ENCODE measurements at regions of chr15 and their contacts with region 1.

Region 1: DNA sequence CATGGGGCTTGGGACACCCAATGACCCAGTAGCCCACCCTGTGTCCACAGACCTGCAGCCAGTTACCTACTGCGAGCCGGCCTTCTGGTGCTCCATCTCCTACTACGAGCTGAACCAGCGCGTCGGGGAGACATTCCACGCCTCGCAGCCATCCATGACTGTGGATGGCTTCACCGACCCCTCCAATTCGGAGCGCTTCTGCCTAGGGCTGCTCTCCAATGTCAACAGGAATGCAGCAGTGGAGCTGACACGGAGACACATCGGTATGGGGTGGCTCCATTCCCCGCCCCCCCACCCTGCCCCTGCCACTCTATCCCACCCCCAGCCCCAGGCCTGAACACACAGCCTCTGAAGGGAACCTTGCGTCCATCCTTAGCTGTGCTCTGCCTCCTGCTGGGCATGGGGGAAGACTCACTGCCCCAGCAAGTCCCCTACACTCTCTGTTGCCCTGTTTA is 73.2 kb downstream of the AAGAB start:
- DNase-seq: peak in 4 of 9 donors; percentile 7 to 17 (median 11)
- ATAC-seq: no peak
- H3K4me3 ChIP-seq: no peak overlapping the region
- H3K4me3 Mint-ChIP-seq: no peak overlapping the region
- H3K27ac ChIP-seq: no peak overlapping the region
- H3K27ac Mint-ChIP-seq: no peak overlapping the region
- H3K4me1 ChIP-seq: no peaks in the 10 kb centered on the region
- H3K4me1 Mint-ChIP-seq: peaks cover 0 to 23% (median 8%) of the 10 kb centered on the region in 7 donors
- H3K27me3 ChIP-seq: no peaks in the 10 kb centered on the region
- H3K27me3 Mint-ChIP-seq: no peaks in the 10 kb centered on the region

Region 2: DNA sequence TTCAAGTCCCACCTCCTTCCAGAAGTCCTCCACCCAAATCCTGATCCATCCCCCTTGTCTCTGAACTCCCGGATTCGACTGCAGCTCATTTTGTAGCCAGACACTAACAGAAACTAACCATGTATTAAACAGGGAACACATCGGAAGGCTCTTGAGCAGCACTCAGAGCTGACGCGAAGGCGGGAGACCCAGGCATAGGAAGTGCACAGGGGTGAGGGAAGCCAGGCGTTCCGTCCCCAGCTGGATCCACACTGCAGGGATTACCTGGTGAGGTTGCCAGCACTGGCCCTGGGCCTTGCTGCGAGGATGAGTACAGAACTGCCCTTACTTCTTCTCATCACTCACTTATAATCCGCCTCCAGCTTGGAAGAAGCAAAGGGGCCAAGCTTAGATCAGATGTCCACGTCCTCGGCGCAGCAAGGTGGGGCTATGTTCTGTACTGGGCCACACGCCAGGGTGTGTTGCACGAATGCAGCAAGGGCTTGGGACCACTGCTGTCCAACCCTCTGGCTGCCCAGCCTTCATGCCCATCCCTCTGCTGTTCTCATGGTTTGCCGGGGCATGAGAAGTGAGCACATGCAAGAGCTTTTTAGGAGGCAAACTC is 240.0 kb before region 1 on chr15:
- CTCF ChIA-PET with region 1: interaction called, 10 read pairs
- POLR2A ChIA-PET with region 1: no interaction called
- intact Hi-C with region 1: loop called (anchors 1 to 2 kb)
- DNase-seq: no peak
- ATAC-seq: no peak
- H3K4me3 ChIP-seq: no peak overlapping the region
- H3K4me3 Mint-ChIP-seq: no peak overlapping the region
- H3K27ac ChIP-seq: no peak overlapping the region
- H3K27ac Mint-ChIP-seq: no peak overlapping the region
- H3K4me1 ChIP-seq: no peaks in the 10 kb centered on the region
- H3K4me1 Mint-ChIP-seq: peaks cover 0 to 7% (median 0%) of the 10 kb centered on the region in 7 donors
- H3K27me3 ChIP-seq: no peaks in the 10 kb centered on the region
- H3K27me3 Mint-ChIP-seq: peaks cover 0 to 4% (median 0%) of the 10 kb centered on the region in 5 donors

Region 3: DNA sequence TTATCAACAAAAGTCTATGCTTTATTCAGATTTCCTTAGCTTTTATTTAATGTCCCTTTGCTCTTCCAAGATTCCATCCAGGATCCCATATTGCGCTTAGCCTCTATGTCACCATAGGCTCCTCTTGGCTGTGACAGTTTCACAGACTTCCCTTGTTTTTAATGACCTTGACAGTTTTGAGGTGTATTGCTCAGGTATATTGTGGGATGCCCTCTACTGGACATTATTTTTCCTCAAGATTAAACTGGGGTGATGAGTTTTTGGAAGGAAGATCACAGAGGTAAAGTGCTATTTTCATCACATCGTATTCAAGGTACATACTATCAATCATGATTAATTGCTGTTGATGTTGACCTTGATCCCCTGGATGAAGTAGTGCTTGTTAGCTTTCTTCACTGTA is 215.0 kb before region 1 on chr15:
- CTCF ChIA-PET with region 1: no interaction called
- POLR2A ChIA-PET with region 1: no interaction called
- intact Hi-C with region 1: loop called in 1 of 2 experiments (anchors 5 kb)
- DNase-seq: peak in 5 of 9 donors; percentile 8 to 29 (median 12)
- ATAC-seq: no peak
- H3K4me3 ChIP-seq: no peak overlapping the region
- H3K4me3 Mint-ChIP-seq: no peak overlapping the region
- H3K27ac ChIP-seq: no peak overlapping the region
- H3K27ac Mint-ChIP-seq: no peak overlapping the region
- H3K4me1 ChIP-seq: no peaks in the 10 kb centered on the region
- H3K4me1 Mint-ChIP-seq: no peaks in the 10 kb centered on the region
- H3K27me3 ChIP-seq: no peaks in the 10 kb centered on the region
- H3K27me3 Mint-ChIP-seq: peaks cover 0 to 18% (median 0%) of the 10 kb centered on the region in 5 donors

Region 4: GRCh38 chr15:66994927-66995656 is 186.1 kb before region 1 on chr15:
- CTCF ChIA-PET with region 1: no interaction called
- POLR2A ChIA-PET with region 1: no interaction called
- intact Hi-C with region 1: no loop called
- DNase-seq: no peak
- ATAC-seq: no peak
- H3K4me3 ChIP-seq: no peak overlapping the region
- H3K4me3 Mint-ChIP-seq: no peak overlapping the region
- H3K27ac ChIP-seq: no peak overlapping the region
- H3K27ac Mint-ChIP-seq: no peak overlapping the region
- H3K4me1 ChIP-seq: no peaks in the 10 kb centered on the region
- H3K4me1 Mint-ChIP-seq: peaks cover 0 to 2% (median 0%) of the 10 kb centered on the region in 7 donors
- H3K27me3 ChIP-seq: no peaks in the 10 kb centered on the region
- H3K27me3 Mint-ChIP-seq: peaks cover 0 to 25% (median 0%) of the 10 kb centered on the region in 5 donors

Region 5: DNA sequence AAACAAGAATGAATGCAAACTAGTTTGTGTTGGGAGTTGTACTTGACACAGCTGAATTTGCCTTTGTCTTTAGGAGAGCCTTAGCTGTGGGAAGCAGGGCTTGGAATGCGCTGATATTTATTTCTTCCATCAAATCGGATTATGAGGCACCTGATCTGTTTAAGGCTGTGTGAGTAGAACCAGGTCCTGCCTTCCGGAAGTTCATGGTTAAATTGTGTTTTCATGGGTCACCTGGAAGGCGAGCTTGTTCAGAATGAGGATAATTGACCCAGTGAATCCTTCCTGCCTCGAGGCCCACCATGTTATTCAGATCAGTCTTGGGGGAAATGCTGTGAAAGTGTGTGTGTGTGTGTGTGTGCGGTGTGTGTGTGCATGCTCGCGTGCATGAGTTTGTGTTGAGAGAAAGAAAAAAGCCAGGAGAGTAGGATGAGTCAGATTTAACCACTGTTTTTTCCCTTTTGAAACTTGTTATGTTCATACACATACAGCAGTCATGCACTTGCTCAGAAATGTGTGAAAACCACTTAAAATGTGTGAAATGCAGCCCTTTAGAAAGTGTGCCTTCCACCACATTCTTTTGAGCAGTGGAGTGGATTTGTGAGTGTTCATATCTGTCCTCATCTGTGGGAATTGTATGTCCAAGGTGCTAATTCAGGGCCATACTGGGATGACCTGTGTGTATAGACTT is 79.2 kb before region 1 on chr15:
- CTCF ChIA-PET with region 1: no interaction called
- POLR2A ChIA-PET with region 1: no interaction called
- intact Hi-C with region 1: no loop called
- DNase-seq: peak in 1 of 9 donors; percentile 51
- ATAC-seq: peak; percentile 62
- H3K4me3 ChIP-seq: peak overlapping the region; percentile 15
- H3K4me3 Mint-ChIP-seq: no peak overlapping the region
- H3K27ac ChIP-seq: peak overlapping the region; percentile 61
- H3K27ac Mint-ChIP-seq: no peak overlapping the region
- H3K4me1 ChIP-seq: peaks cover 92 to 95% of the 10 kb centered on the region in 2 donors
- H3K4me1 Mint-ChIP-seq: peaks cover 26 to 64% (median 27%) of the 10 kb centered on the region in 7 donors
- H3K27me3 ChIP-seq: no peaks in the 10 kb centered on the region
- H3K27me3 Mint-ChIP-seq: no peaks in the 10 kb centered on the region

Region 6: GRCh38 chr15:67446449-67446848 is 265.2 kb after region 1 on chr15:
- CTCF ChIA-PET with region 1: no interaction called
- POLR2A ChIA-PET with region 1: no interaction called
- intact Hi-C with region 1: no loop called
- DNase-seq: no peak
- ATAC-seq: no peak
- H3K4me3 ChIP-seq: no peak overlapping the region
- H3K4me3 Mint-ChIP-seq: no peak overlapping the region
- H3K27ac ChIP-seq: no peak overlapping the region
- H3K27ac Mint-ChIP-seq: no peak overlapping the region
- H3K4me1 ChIP-seq: no peaks in the 10 kb centered on the region
- H3K4me1 Mint-ChIP-seq: no peaks in the 10 kb centered on the region
- H3K27me3 ChIP-seq: no peaks in the 10 kb centered on the region
- H3K27me3 Mint-ChIP-seq: peaks cover 0 to 12% (median 0%) of the 10 kb centered on the region in 5 donors

Measured in naive thymus-derived CD4-positive, alpha-beta T cell (primary cell).